ENCODE measurements at regions of chr16 and their contacts with region 1.

Region 1: GRCh38 chr16:12455287-12455798 is 348.3 kb downstream of the CPPED1 start:
- DNase-seq: peak; percentile 53
- H3K4me3 ChIP-seq: no peak overlapping the region
- H3K27ac ChIP-seq: no peak overlapping the region
- H3K4me1 ChIP-seq: no peaks in the 10 kb centered on the region
- H3K27me3 ChIP-seq: no peaks in the 10 kb centered on the region
- CTCF ChIP-seq: peak; percentile 87 to 94
- POLR2A ChIP-seq: no peak

Region 2: DNA sequence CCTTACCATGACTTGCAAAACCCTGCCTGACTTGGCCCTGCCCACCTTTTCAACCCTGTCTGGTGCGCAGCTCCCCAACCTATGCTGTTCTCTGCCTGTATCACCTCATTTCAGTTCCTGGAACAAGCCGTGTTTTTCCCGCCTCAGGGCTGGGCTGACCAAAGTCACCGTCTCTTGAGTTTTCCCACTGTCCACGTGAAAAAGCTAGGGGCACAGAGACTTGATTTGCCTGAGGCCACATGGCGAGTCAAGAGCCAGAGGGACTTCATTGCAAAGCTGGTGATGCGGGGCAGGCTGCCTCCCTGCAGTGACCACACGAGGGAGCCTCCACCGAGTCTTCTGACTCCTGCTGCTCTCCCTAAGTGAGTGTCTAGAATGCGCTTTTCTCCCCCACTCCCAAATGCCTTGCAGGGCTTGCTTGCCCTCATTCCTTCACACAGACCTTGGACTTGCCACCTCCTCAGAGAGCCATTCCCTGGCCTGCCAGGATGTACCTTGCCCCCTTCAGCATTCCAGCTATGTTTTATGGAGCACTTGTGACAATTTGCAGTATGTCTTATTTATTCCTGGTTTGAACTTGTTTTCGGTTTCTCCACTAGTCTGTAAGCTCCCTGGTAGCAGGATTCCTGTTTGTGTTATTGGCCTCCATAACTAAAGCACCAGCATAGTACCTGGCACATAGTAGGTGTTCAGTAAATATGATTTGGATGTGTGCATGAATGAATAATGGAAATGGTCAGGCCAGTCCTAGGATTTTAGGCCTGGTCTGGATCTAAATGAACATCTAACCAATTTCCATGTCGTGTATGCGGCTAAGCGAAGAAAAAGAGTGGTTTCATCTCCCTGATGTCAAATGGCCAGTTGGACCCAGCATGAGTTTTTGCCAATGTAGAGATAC is 226.5 kb before region 1 on chr16:
- CTCF ChIA-PET with region 1: interaction called, 12 read pairs
- POLR2A ChIA-PET with region 1: no interaction called
- dilution Hi-C with region 1: no loop called
- intact Hi-C with region 1: no loop called
- DNase-seq: peak; percentile 67
- H3K4me3 ChIP-seq: no peak overlapping the region
- H3K27ac ChIP-seq: no peak overlapping the region
- H3K4me1 ChIP-seq: no peaks in the 10 kb centered on the region
- H3K27me3 ChIP-seq: no peaks in the 10 kb centered on the region
- CTCF ChIP-seq: peak; percentile 64 to 93
- POLR2A ChIP-seq: no peak

Region 3: DNA sequence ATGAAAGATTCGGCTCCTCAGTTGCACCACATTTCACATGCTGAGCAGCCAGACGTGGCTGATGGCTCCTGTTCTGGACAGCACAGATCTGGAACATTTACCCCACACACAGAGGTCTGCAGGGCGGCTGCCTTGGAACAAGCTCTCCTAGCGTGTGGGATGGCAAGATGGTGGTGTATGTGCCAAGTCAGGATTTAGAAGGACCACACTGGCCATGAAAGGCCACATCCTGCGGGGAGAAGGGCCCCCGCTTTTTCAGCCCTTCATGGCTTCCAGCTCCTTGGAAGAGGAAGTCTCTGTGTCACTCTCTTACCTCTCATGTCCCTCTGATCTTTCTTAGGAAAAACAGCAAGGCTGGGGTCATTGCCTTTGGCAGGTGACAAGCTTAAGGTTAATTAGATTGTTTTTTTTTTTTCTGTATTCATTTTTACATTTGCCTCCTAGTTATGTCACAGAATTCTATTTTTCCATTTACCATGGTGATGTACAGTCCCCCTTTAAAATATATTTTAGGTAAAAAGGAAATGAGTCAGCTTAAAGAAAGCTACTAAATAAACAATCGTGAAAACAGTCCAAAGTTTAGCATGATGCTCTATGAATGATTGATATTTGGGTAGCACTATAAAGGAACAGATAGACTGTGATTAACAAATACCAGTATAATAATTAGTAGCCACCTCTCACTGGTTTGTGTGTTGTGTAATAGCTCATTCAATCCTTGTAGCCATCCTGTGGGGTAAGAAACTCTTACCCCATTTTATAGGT is 48.2 kb before region 1 on chr16:
- CTCF ChIA-PET with region 1: interaction called, 3 read pairs
- POLR2A ChIA-PET with region 1: no interaction called
- dilution Hi-C with region 1: no loop called
- intact Hi-C with region 1: loop called (anchors 2 kb)
- DNase-seq: peak; percentile 75
- H3K4me3 ChIP-seq: no peak overlapping the region
- H3K27ac ChIP-seq: peak overlapping the region; percentile 99
- H3K4me1 ChIP-seq: peaks cover 42% of the 10 kb centered on the region
- H3K27me3 ChIP-seq: no peaks in the 10 kb centered on the region
- CTCF ChIP-seq: no peak
- POLR2A ChIP-seq: peak; percentile 34

Region 4: DNA sequence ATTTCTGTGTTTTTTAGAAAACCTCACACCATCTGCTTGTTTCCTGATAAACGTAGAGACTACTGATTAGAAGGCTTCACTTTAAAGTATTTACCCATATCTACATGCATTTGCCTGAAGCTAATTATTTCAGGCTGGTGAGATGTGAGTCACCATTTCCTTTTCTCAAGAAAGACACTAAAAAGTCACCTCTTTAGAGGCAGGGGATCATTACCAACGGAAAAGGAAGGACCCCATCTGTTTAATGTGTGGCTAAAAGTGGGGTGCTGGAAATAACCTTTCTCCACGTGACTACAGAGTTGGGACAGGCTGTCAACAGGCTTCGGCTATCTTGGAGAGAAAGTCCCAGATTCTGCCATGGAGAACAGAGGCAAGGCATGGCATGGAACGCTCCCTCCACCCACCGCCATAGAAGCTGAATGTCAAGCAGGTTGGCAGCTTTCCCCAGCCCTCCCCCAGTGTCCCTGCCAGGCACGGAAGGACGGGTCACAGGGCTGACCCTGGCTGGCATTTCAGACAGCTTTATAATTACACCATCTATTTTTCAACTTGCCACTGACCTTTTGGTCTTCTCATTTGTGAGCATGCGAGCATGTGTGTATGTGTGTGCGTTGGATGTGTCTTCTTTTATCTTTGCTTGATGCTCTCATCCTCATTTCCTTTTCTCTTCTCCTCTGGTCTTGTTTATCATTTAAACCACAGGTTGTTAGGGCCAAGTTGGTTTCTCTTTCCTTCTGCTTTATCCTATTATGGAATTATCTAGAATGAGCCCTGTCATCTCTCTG is 191.3 kb after region 1 on chr16:
- CTCF ChIA-PET with region 1: no interaction called
- POLR2A ChIA-PET with region 1: interaction called, 6 read pairs
- dilution Hi-C with region 1: no loop called
- intact Hi-C with region 1: loop called (anchors 5 kb)
- DNase-seq: peak; percentile 94
- H3K4me3 ChIP-seq: no peak overlapping the region
- H3K27ac ChIP-seq: peak overlapping the region; percentile 67
- H3K4me1 ChIP-seq: peaks cover 29% of the 10 kb centered on the region
- H3K27me3 ChIP-seq: no peaks in the 10 kb centered on the region
- CTCF ChIP-seq: no peak
- POLR2A ChIP-seq: no peak

Region 5: GRCh38 chr16:12819126-12820117 is 364.1 kb after region 1 on chr16:
- CTCF ChIA-PET with region 1: interaction called, 7 read pairs
- POLR2A ChIA-PET with region 1: no interaction called
- dilution Hi-C with region 1: no loop called
- intact Hi-C with region 1: loop called (anchors 1 kb)
- DNase-seq: peak; percentile 60
- H3K4me3 ChIP-seq: no peak overlapping the region
- H3K27ac ChIP-seq: no peak overlapping the region
- H3K4me1 ChIP-seq: no peaks in the 10 kb centered on the region
- H3K27me3 ChIP-seq: peaks cover 0 to 2% of the 10 kb centered on the region in 2 experiments
- CTCF ChIP-seq: peak; percentile 83 to 88
- POLR2A ChIP-seq: no peak

Region 6: DNA sequence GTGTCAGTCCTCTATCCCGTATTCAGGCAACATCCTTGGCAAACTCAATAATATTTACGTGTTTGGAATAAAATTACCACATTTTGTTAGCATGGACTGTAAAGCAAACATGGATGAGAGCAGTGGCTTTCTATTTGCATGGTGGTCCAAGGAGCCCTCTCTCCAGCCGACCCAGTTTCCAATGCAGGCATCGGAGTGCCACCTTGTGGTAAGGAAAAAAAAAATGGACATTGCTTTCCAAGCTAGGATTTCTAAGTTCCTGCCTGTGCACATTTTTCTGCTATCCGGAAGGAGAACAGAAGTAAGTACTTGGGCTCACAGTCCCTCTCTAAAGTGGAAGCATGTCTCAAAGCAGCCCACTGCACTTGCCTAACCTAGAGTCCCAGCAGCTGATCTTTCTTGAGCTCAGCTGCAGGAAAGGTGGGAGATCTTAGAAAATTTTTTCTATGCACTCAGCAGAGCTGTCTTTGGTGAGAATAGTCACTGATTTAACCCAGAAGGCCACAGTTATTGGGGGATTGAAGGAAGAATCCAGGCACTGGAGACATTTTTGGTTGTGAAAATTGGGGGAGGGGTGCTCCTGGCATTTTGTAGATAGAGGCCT is 1418.6 kb after region 1 on chr16:
- CTCF ChIA-PET with region 1: interaction called, 13 read pairs
- POLR2A ChIA-PET with region 1: no interaction called
- dilution Hi-C with region 1: no loop called
- intact Hi-C with region 1: loop called (anchors 5 kb)
- DNase-seq: peak; percentile 37
- H3K4me3 ChIP-seq: no peak overlapping the region
- H3K27ac ChIP-seq: no peak overlapping the region
- H3K4me1 ChIP-seq: no peaks in the 10 kb centered on the region
- H3K27me3 ChIP-seq: peaks cover 0 to 2% of the 10 kb centered on the region in 2 experiments
- CTCF ChIP-seq: peak; percentile 37 to 50
- POLR2A ChIP-seq: no peak

Measured in endothelial cell of umbilical vein (primary cell).